ENCODE measurements at regions of chr7 and their contacts with region 1.

Region 1: GRCh38 chr7:107150375-107151073 is 18.3 kb upstream of the HBP1 start:
- DNase-seq: peak; percentile 43 to 90 (median 74)
- ATAC-seq: peak; percentile 71 to 85 (median 73)
- H3K4me3 ChIP-seq: no peak overlapping the region
- H3K4me3 Mint-ChIP-seq: no peak overlapping the region
- H3K27ac ChIP-seq: no peak overlapping the region
- H3K27ac Mint-ChIP-seq: no peak overlapping the region
- H3K4me1 ChIP-seq: no peaks in the 10 kb centered on the region
- H3K4me1 Mint-ChIP-seq: peaks cover 0 to 7% (median 5%) of the 10 kb centered on the region in 3 donors
- H3K27me3 ChIP-seq: no peaks in the 10 kb centered on the region
- H3K27me3 Mint-ChIP-seq: no peaks in the 10 kb centered on the region

Region 2: GRCh38 chr7:106793015-106793975 is 357.2 kb before region 1 on chr7:
- CTCF ChIA-PET with region 1: interaction called, 14 to 59 read pairs
- POLR2A ChIA-PET with region 1: interaction called, 3 to 6 read pairs
- DNase-seq: peak in 21 of 35 experiments; percentile 5 to 80 (median 23)
- ATAC-seq: peak in 3 of 4 experiments; percentile 44 to 63 (median 46)
- H3K4me3 ChIP-seq: no peak overlapping the region
- H3K4me3 Mint-ChIP-seq: no peak overlapping the region
- H3K27ac ChIP-seq: no peak overlapping the region
- H3K27ac Mint-ChIP-seq: no peak overlapping the region
- H3K4me1 ChIP-seq: no peaks in the 10 kb centered on the region
- H3K4me1 Mint-ChIP-seq: peaks cover 3 to 5% (median 5%) of the 10 kb centered on the region in 3 donors
- H3K27me3 ChIP-seq: no peaks in the 10 kb centered on the region
- H3K27me3 Mint-ChIP-seq: no peaks in the 10 kb centered on the region

Region 3: DNA sequence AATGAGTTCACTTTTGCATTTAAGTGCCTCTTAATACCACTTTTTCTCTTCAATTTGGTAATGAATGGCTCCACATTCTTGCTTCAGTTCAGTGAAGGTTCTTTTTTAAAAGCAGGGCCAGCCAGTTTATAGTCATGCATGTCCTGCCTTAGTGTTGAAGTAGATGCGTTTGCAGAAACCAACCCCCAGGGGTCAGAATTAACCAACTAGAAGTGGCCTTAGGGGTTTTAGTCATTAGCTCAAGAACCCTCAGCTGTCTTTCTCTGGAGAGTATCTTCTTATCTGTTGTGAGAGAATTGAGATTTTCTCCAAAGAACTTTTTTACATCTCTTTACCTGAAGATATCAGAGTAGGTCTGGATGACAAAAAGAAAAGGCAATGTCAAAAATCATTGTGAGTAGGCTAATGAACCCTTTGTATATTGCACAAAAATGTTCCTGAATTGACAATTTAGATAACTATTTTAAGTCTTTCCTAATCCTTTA is 203.2 kb before region 1 on chr7:
- CTCF ChIA-PET with region 1: interaction called, 5 to 18 read pairs
- POLR2A ChIA-PET with region 1: no interaction called
- DNase-seq: peak in 21 of 35 experiments; percentile 2 to 62 (median 11)
- ATAC-seq: peak in 3 of 4 experiments; percentile 27 to 66 (median 47)
- H3K4me3 ChIP-seq: no peak overlapping the region
- H3K4me3 Mint-ChIP-seq: no peak overlapping the region
- H3K27ac ChIP-seq: no peak overlapping the region
- H3K27ac Mint-ChIP-seq: no peak overlapping the region
- H3K4me1 ChIP-seq: no peaks in the 10 kb centered on the region
- H3K4me1 Mint-ChIP-seq: no peaks in the 10 kb centered on the region
- H3K27me3 ChIP-seq: peaks cover 0 to 2% of the 10 kb centered on the region in 2 experiments
- H3K27me3 Mint-ChIP-seq: peaks cover 4 to 7% of the 10 kb centered on the region in 2 donors